Aorta (tissue), 5 donors: ENCODE measurements at regions of chr1 and their contacts with region 1.

Region 1: GRCh38 chr1:93447516-93448291 is at the start of gene FNBP1L:
- DNase-seq: peak; percentile 73 to 88
- ATAC-seq: peak; percentile 93
- H3K4me3 ChIP-seq: peak within 1 kb of the TSS; percentile 82 to 93
- H3K27ac ChIP-seq: no peak within 1 kb of the TSS
- H3K4me1 ChIP-seq: no peaks in the 10 kb centered on the region
- H3K27me3 ChIP-seq: no peaks in the 10 kb centered on the region
- total RNA-seq, gene FNBP1L: 10.6 to 28.6 TPM

Region 2: DNA sequence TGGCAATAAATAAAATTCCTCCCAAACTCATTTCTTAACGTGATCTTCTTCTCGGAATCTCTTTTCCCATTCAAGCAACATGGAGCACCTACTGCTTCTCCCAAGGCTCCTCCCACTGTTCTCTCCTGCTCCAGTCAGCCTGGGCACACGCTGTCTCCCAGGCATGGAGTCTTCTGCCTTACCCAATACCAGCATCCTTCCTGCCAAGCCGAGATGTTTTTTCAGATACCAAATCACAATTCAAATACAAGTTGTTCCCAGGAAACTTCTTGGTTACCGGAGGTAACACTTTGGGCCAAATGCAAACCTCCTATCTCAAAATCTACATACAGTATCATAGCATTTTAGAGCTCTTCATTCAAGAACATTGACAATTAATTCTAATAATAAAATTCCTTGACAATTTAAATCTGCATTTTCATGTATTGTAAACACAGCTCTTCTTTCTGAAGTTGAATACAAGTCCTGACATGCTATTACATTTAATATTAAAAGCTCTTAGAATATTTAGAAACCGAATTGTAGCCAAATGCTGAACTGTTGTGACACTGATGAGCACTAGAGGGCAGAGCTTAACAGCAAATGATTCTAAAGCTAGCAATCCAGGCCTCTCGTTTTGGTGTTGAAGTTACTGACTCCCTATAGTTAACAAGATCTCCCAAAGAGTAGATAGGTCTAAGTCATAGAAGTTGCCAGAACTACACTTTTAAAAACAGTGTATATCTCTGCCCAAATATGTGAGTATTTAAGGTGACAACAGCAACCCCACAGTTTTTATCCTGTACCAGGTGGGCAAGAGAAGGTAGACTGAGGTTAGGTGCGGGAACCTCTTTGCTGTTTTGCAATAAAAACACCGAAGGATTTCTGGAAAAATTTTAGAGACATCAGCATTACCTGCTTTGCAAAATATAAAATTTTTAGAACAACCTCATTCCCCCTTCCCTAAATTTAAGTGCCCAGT is 181.7 kb after region 1 on chr1:
- intact Hi-C with region 1: loop called in 1 of 2 experiments (anchors 5 kb)
- DNase-seq: no peak
- ATAC-seq: peak; percentile 80
- H3K4me3 ChIP-seq: no peak overlapping the region
- H3K27ac ChIP-seq: no peak overlapping the region
- H3K4me1 ChIP-seq: no peaks in the 10 kb centered on the region
- H3K27me3 ChIP-seq: no peaks in the 10 kb centered on the region